GM12878 (cell line): ENCODE measurements at regions of chr6 and their contacts with region 1.

Region 1: DNA sequence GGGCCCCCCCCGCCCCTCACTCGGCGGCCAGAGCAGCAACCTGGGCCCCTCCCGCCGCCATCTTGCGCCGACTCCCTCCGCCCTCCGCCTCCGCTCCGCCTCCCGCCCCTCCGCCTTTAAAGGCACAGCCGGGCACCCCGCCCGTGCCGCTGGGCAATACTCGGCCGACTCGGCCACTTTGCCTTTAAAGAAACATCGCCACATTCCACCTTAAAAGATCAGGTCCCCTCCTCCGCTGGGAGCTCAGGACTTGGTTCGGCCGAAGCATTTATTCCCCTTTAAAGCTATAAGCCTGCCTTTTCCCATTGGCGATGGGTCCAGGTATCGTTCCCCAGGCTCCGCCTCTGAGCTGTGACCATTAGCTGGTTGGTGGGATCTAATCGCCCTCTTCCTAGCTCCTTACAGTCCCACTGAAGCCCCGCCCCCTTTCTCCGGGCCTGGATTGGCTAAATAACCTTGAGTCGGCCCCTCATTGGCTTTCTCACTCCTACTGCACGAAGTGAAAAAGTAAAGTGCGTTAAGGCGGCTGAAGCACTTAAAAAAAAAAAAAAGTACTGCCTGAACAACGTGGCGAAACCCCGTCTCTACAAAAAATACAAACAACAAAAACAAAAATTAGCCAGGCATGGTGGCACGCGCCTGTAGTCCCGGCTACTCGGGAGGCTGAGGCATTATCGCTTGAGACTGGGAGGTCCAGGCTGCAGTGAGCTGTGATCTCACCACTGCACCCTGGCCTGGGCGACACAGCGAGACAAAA is at the start of gene ZBTB22:
- DNase-seq: peak; percentile 94
- ATAC-seq: peak; percentile 69
- H3K4me3 ChIP-seq: peak within 1 kb of the TSS; percentile 63
- H3K27ac ChIP-seq: peak within 1 kb of the TSS; percentile 74
- H3K4me1 ChIP-seq: peaks cover 35% of the 10 kb centered on the region
- H3K27me3 ChIP-seq: no peaks in the 10 kb centered on the region
- CTCF ChIP-seq: no peak
- EP300 ChIP-seq: no peak
- POLR2A ChIP-seq: peak; percentile 58
- RAD21 ChIP-seq: no peak
- polyA plus RNA-seq, gene ZBTB22: 0.11 to 0.62 TPM

Region 2: DNA sequence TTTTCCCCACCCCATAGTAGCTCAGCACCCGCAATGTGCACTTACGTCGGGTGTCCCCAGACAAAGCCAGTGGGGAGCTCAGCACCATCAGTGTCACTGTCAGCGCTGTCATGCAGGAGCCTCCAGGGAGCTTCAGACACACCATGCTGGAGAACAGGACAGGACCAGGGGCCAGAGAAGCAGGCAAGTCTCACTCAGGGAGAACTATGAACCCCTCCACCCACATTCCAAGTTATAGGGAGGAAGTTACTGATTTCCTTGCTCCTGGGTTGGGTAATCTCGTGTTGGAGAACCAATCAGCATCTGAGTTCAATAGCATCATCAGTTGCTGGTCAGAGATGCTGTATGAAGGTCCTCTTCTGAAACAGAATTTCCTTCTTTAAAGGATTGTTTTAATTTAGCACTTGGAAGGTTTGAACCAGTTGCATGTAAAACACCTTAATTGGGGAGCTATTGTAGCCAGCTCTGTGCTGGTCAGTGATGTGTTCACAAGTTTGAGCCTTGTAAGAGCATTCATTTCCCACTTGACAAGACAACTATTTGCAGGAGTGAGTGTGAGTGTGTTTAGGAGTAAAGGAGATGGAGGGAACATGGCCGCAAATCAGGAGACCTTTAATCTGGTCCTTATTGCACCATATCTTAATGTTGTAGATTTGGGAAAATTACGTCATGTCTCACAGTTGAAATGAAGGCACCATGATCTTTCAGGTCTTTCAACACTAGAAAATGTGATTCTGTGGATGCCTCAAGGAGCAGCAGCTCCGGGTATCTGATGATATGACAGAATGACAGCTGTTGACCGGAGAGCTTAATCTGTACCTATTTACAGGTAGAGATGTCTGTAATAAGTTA is 728.0 kb before region 1 on chr6 and contains the start of gene HLA-DRB1:
- CTCF ChIA-PET with region 1: no interaction called
- POLR2A ChIA-PET with region 1: no interaction called
- RAD21 ChIA-PET with region 1: no interaction called
- SMC1A ChIA-PET with region 1: no interaction called
- in situ Hi-C with region 1: no loop called
- intact Hi-C with region 1: no loop called
- DNase-seq: peak; percentile 91
- ATAC-seq: peak; percentile 89
- H3K4me3 ChIP-seq: peak within 1 kb of the TSS; percentile 72
- H3K27ac ChIP-seq: peak within 1 kb of the TSS; percentile 93
- H3K4me1 ChIP-seq: peaks cover 4% of the 10 kb centered on the region; the same call in 1 of the 2 replicates
- H3K27me3 ChIP-seq: no peaks in the 10 kb centered on the region
- CTCF ChIP-seq: no peak
- EP300 ChIP-seq: peak in 1 of 2 experiments; percentile 20; a peak in 1 of 4 replicates
- POLR2A ChIP-seq: peak; percentile 82
- RAD21 ChIP-seq: no peak
- polyA plus RNA-seq, gene HLA-DRB1: 312 to 364 TPM

Region 3: DNA sequence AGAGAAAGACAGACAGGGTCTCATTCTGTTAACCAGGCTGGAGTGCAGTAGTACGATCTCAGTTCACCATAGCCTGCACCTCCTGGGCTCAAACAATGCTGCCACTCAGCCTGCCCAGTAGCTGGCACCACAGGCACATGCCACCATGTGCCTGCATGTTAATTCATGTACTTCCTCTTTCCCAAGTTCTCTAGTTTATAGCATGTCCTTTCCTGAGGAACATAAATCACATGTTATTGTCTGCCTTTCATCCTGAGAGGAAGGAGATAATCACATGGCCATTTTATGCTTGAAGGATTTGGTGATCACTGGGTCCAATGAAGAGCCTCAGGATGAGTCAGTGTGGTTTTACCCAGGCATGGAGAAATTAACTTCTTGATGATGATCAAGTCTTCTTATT is 173.5 kb before region 1 on chr6:
- CTCF ChIA-PET with region 1: no interaction called
- POLR2A ChIA-PET with region 1: no interaction called
- RAD21 ChIA-PET with region 1: no interaction called
- SMC1A ChIA-PET with region 1: no interaction called
- in situ Hi-C with region 1: no loop called
- intact Hi-C with region 1: no loop called
- DNase-seq: no peak
- ATAC-seq: peak; percentile 63
- H3K4me3 ChIP-seq: no peak overlapping the region
- H3K27ac ChIP-seq: no peak overlapping the region
- H3K4me1 ChIP-seq: peaks cover 8% of the 10 kb centered on the region
- H3K27me3 ChIP-seq: no peaks in the 10 kb centered on the region
- CTCF ChIP-seq: no peak
- EP300 ChIP-seq: no peak
- POLR2A ChIP-seq: no peak
- RAD21 ChIP-seq: no peak

Region 4: GRCh38 chr6:33271458-33272274 is 46.2 kb before region 1 on chr6 and contains the starts of genes RPS18 and VPS52:
- CTCF ChIA-PET with region 1: interaction called, 7 read pairs
- POLR2A ChIA-PET with region 1: interaction called, 14 read pairs
- RAD21 ChIA-PET with region 1: interaction called, 12 read pairs
- SMC1A ChIA-PET with region 1: no interaction called
- in situ Hi-C with region 1: no loop called
- intact Hi-C with region 1: no loop called
- DNase-seq: peak; percentile 96
- ATAC-seq: peak; percentile 87
- H3K4me3 ChIP-seq: peak within 1 kb of the TSS; percentile 88
- H3K27ac ChIP-seq: peak within 1 kb of the TSS; percentile 97
- H3K4me1 ChIP-seq: peaks cover 18% of the 10 kb centered on the region
- H3K27me3 ChIP-seq: no peaks in the 10 kb centered on the region
- CTCF ChIP-seq: no peak
- EP300 ChIP-seq: peak in 1 of 2 experiments; percentile 52; a peak in 2 of 4 replicates
- POLR2A ChIP-seq: peak; percentile 100
- RAD21 ChIP-seq: no peak
- polyA plus RNA-seq, gene RPS18: 17,270 to 20,828 TPM
- polyA plus RNA-seq, gene VPS52: 11.3 to 13.2 TPM

Region 5: DNA sequence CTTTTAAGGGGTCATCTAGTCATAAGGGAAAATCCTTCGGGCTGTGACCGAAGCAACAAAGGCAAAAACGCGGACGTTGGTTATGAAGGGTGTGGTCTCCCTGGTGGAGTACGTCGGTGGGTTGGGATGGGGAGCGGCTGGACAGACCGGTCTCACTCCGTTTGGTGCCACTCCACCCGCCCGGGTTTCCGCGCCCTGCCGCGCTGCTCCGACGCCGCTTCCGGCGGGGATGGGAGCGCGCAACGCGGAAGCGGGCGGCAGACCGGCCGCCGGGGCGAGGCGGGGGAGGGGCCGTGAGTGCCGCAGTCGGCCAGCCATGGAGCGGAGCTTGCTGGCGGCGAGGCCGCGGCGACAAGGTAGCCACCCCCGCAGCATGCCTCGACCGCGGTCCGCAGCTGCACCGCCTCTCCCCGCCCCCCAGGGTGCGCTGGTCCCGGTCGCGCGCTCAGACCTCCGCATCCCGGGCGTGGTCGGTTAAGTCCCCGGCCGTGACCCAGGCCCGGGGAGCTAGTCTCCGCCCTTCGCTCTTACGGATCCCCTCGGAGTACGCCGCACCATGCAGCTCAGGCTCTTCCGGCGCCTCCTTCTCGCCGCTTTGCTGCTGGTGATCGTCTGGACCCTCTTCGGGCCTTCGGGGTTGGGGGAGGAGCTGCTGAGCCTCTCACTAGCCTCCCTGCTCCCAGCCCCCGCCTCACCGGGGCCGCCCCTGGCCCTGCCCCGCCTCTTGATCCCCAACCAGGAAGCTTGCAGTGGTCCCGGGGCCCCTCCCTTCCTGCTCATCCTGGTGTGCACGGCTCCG is 40.8 kb before region 1 on chr6 and contains the start of gene B3GALT4:
- CTCF ChIA-PET with region 1: interaction called, 7 read pairs
- POLR2A ChIA-PET with region 1: interaction called, 14 read pairs
- RAD21 ChIA-PET with region 1: interaction called, 12 read pairs
- SMC1A ChIA-PET with region 1: no interaction called
- in situ Hi-C with region 1: no loop called
- intact Hi-C with region 1: loop called (anchors 1 kb)
- DNase-seq: peak; percentile 49
- ATAC-seq: peak; percentile 75
- H3K4me3 ChIP-seq: peak within 1 kb of the TSS; percentile 87
- H3K27ac ChIP-seq: peak within 1 kb of the TSS; percentile 86
- H3K4me1 ChIP-seq: peaks cover 22% of the 10 kb centered on the region
- H3K27me3 ChIP-seq: no peaks in the 10 kb centered on the region
- CTCF ChIP-seq: peak; percentile 34 to 60 (median 47); a peak in 4 of 6 replicates
- EP300 ChIP-seq: 0 out of 4 replicates have a peak, but pooled peaks of 1 of the 2 experiments have one; percentile 9
- POLR2A ChIP-seq: peak; percentile 92
- RAD21 ChIP-seq: no peak
- polyA plus RNA-seq, gene B3GALT4: 0.27 to 0.37 TPM

Region 6: DNA sequence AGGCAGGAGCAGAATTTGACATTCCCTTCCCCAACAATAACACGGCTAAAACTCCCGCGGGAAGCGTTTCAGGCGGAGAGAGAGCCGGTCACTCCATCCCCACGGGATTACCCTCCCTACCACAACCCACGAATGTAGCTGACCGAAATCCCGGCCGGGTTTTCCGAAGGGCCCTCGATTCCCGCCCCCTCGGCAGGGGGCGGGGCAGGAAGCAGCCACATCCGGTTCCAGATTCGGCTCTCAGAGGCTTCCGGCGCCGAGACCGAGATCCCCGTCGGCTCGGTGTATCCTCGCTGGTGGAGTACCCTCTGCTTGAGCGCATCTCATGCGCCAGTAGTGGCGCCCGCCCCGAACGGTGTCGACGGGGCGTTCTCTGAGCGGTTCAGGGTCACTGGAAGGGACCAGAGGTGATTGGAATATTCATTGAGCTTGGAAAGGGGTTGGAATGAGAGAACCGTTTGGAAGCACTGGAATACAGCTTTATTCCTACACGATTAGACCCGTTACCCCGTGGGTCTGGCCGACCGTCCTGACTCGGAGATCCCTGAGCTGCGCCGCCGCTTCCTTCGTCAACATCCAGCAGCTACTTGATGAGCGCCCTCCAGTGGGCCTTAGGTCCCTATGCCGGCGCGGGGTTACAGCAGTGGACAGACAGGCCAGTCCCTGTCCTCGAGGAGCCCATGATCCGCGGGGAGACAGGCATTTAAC is 18.5 kb before region 1 on chr6:
- CTCF ChIA-PET with region 1: interaction called, 30 read pairs
- POLR2A ChIA-PET with region 1: interaction called, 41 read pairs
- RAD21 ChIA-PET with region 1: interaction called, 4 read pairs
- SMC1A ChIA-PET with region 1: interaction called, 8 read pairs
- in situ Hi-C with region 1: no loop called
- intact Hi-C with region 1: loop called (anchors 1 kb)
- DNase-seq: peak; percentile 69
- ATAC-seq: peak; percentile 89
- H3K4me3 ChIP-seq: peak overlapping the region; percentile 100
- H3K27ac ChIP-seq: peak overlapping the region; percentile 86
- H3K4me1 ChIP-seq: peaks cover 11% of the 10 kb centered on the region
- H3K27me3 ChIP-seq: no peaks in the 10 kb centered on the region
- CTCF ChIP-seq: peak; percentile 58 to 72 (median 69)
- EP300 ChIP-seq: peak in 1 of 2 experiments; percentile 47; a peak in 1 of 4 replicates
- POLR2A ChIP-seq: peak; percentile 94
- RAD21 ChIP-seq: no peak

Region 7: GRCh38 chr6:33344701-33345697 is 27.2 kb after region 1 on chr6:
- CTCF ChIA-PET with region 1: interaction called, 19 read pairs
- POLR2A ChIA-PET with region 1: interaction called, 12 read pairs
- RAD21 ChIA-PET with region 1: interaction called, 22 read pairs
- SMC1A ChIA-PET with region 1: interaction called, 13 read pairs
- in situ Hi-C with region 1: no loop called
- intact Hi-C with region 1: no loop called
- DNase-seq: peak; percentile 58
- ATAC-seq: peak; percentile 81
- H3K4me3 ChIP-seq: peak overlapping the region; percentile 46; the same call in 1 of the 2 replicates
- H3K27ac ChIP-seq: peak overlapping the region; percentile 41
- H3K4me1 ChIP-seq: peaks cover 15% of the 10 kb centered on the region
- H3K27me3 ChIP-seq: no peaks in the 10 kb centered on the region
- CTCF ChIP-seq: peak; percentile 48 to 60 (median 55); a peak in 5 of 6 replicates
- EP300 ChIP-seq: no peak
- POLR2A ChIP-seq: no peak
- RAD21 ChIP-seq: peak; percentile 63

Region 8: DNA sequence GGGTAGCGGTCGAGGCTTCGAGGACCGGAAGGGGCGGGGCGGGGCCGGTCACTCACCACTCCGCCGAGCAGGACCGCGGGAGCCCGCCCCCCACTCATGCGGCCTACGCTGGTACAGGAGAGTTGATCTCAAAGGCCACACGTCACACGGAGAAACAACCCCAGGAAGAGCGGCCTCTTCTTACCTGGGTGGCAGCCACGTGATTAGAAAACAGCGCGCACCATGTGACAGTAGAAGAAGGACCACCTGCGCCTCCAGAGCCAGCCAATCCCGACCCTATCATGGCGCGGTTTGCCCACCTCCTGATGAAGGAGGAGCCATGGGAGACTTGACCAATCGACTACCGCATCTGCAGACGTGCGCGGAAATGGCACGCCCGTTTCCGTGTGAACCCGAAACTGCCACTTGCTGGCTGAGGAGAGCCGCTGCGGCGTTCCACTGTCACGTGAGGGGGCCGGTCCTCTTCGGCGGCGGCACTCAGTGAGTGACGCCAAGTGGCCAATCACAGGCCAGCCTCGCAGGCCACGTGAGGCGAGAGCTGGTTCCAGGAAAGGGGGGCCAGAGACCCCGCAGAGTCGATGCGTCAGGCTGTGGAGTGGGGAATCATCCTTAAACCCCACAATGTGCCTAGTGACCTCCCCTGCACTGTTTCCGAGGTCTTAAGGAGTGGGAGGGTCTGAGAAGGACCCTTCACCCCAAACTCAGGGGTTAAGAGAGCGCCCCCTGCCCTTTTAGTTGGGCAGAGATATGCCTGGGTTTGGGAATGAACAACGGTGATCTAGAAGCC is 100.2 kb after region 1 on chr6 and contains the start of gene CUTA:
- CTCF ChIA-PET with region 1: interaction called, 6 read pairs
- POLR2A ChIA-PET with region 1: interaction called, 4 read pairs
- RAD21 ChIA-PET with region 1: interaction called, 5 read pairs
- SMC1A ChIA-PET with region 1: interaction called, 3 read pairs
- in situ Hi-C with region 1: no loop called
- intact Hi-C with region 1: loop called (anchors 5 kb)
- DNase-seq: peak; percentile 99
- ATAC-seq: peak; percentile 91
- H3K4me3 ChIP-seq: peak within 1 kb of the TSS; percentile 98
- H3K27ac ChIP-seq: peak within 1 kb of the TSS; percentile 97
- H3K4me1 ChIP-seq: peaks cover 30% of the 10 kb centered on the region
- H3K27me3 ChIP-seq: no peaks in the 10 kb centered on the region; a peak in 2 of 4 replicates
- CTCF ChIP-seq: peak; percentile 41 to 48 (median 43); a peak in 4 of 6 replicates
- EP300 ChIP-seq: no peak; a peak in 1 of 4 replicates
- POLR2A ChIP-seq: peak; percentile 86
- RAD21 ChIP-seq: no peak
- polyA plus RNA-seq, gene CUTA: 268 to 293 TPM

Region 9: GRCh38 chr6:33425668-33426577 is 108.1 kb after region 1 on chr6:
- CTCF ChIA-PET with region 1: interaction called, 3 read pairs
- POLR2A ChIA-PET with region 1: interaction called, 4 read pairs
- RAD21 ChIA-PET with region 1: interaction called, 11 read pairs
- SMC1A ChIA-PET with region 1: interaction called, 3 read pairs
- in situ Hi-C with region 1: no loop called
- intact Hi-C with region 1: no loop called
- DNase-seq: no peak
- ATAC-seq: peak; percentile 77
- H3K4me3 ChIP-seq: peak overlapping the region; percentile 66
- H3K27ac ChIP-seq: peak overlapping the region; percentile 86
- H3K4me1 ChIP-seq: peaks cover 36% of the 10 kb centered on the region
- H3K27me3 ChIP-seq: no peaks in the 10 kb centered on the region; a peak in 2 of 4 replicates
- CTCF ChIP-seq: peak; percentile 46 to 72 (median 69)
- EP300 ChIP-seq: no peak
- POLR2A ChIP-seq: peak; percentile 83
- RAD21 ChIP-seq: peak; percentile 54